ENCODE measurements at regions of chr4 and their contacts with region 1.

Region 1: GRCh38 chr4:105957657-105958056 is 62.4 kb downstream of the NPNT start:
- DNase-seq: no peak
- ATAC-seq: no peak
- H3K4me3 ChIP-seq: no peak overlapping the region
- H3K27ac ChIP-seq: no peak overlapping the region
- H3K4me1 ChIP-seq: no peaks in the 10 kb centered on the region
- H3K27me3 ChIP-seq: 0 out of 2 replicates have a peak, but pooled peaks cover 4% of the 10 kb centered on the region
- CTCF ChIP-seq: no peak
- POLR2A ChIP-seq: no peak
- RAD21 ChIP-seq: no peak

Region 2: DNA sequence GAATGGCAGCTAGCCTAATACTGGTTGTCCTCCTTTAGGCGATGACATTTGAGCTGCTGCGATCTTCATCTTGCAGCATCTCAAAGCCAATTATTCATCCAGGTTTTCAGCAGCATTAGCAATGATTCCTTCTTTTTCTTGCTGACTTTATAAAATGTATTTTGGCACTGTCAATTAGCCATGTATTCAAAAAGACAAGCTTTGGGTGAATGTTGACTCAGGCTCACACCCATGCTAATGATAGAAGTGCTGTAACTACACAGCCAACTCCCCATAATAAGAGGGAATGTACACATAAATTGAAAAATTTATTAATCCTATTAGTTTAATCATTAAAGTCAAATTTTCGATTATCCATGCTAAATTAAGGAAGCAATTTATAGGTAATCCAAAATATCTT is 86.7 kb before region 1 on chr4:
- CTCF ChIA-PET with region 1: no interaction called
- POLR2A ChIA-PET with region 1: interaction called, 11 read pairs
- dilution Hi-C with region 1: no loop called
- in situ Hi-C with region 1: no loop called
- intact Hi-C with region 1: no loop called
- DNase-seq: no peak
- ATAC-seq: no peak
- H3K4me3 ChIP-seq: no peak overlapping the region
- H3K27ac ChIP-seq: no peak overlapping the region
- H3K4me1 ChIP-seq: no peaks in the 10 kb centered on the region
- H3K27me3 ChIP-seq: no peaks in the 10 kb centered on the region; the same call in 1 of the 2 replicates
- CTCF ChIP-seq: no peak
- POLR2A ChIP-seq: no peak
- RAD21 ChIP-seq: no peak

Measured in IMR-90 (cell line).